Activated CD8-positive, alpha-beta T cell treated with anti-CD3 and anti-CD28 coated beads for 36 hours (primary cell): ENCODE measurements at regions of chr3 and their contacts with region 1.

Region 1: DNA sequence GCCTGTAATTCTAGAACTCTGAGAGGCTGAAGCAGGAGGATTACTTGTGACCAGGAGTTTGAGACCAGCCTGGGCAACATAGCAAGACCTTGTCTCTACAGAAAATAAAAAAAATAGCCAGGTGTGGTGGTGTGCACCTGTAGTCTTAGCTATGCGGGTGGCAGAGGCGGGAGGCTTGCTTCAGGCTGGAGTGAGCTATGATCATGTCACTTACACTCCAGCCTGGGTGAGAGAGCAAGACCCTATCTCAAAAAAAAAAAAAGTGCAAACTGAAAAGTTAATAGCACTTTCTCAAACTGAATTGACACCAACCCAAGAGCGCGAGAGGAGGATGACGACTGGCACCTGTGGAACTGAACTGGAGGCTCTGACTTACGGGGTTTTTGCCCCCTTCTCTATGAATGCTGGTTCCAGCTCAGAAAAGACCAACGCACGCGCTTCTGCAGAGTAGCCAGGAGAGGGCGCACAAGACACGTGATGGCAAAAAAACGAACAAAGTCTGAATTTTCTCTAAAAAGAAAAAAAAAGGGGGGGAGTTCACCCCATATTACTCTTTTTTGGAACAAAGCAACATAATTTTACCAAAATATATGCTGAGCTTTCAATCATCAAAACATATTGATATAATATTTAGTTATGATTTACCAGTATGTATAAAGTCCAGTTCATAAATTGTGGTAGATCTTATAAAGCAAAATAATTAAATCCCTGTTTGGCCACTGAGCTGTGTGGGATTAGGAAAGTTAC is 23.7 kb downstream of the CFAP92 start:
- DNase-seq: peak; percentile 73
- ATAC-seq: peak; percentile 80
- H3K4me3 Mint-ChIP-seq: no peak overlapping the region
- H3K27ac Mint-ChIP-seq: no peak overlapping the region
- H3K4me1 Mint-ChIP-seq: peaks cover 6% of the 10 kb centered on the region
- H3K27me3 Mint-ChIP-seq: no peaks in the 10 kb centered on the region
- CTCF ChIP-seq: peak; percentile 96

Region 2: GRCh38 chr3:128922804-128923459 is 47.2 kb before region 1 on chr3:
- CTCF ChIA-PET with region 1: interaction called, 11 read pairs
- POLR2A ChIA-PET with region 1: no interaction called
- intact Hi-C with region 1: no loop called
- DNase-seq: peak; percentile 83
- ATAC-seq: peak; percentile 88
- H3K4me3 Mint-ChIP-seq: peak overlapping the region; percentile 69
- H3K27ac Mint-ChIP-seq: peak overlapping the region; percentile 89
- H3K4me1 Mint-ChIP-seq: peaks cover 37% of the 10 kb centered on the region
- H3K27me3 Mint-ChIP-seq: no peaks in the 10 kb centered on the region
- CTCF ChIP-seq: peak; percentile 6

Region 3: GRCh38 chr3:129003578-129004160 is 33.5 kb after region 1 on chr3:
- CTCF ChIA-PET with region 1: interaction called, 73 read pairs
- POLR2A ChIA-PET with region 1: interaction called, 3 read pairs
- intact Hi-C with region 1: no loop called
- DNase-seq: peak; percentile 63
- ATAC-seq: peak; percentile 71
- H3K4me3 Mint-ChIP-seq: peak overlapping the region; percentile 71
- H3K27ac Mint-ChIP-seq: no peak overlapping the region
- H3K4me1 Mint-ChIP-seq: peaks cover 33% of the 10 kb centered on the region
- H3K27me3 Mint-ChIP-seq: peaks cover 20% of the 10 kb centered on the region
- CTCF ChIP-seq: no peak

Region 4: GRCh38 chr3:129068291-129068886 is 98.2 kb after region 1 on chr3:
- CTCF ChIA-PET with region 1: interaction called, 10 read pairs
- POLR2A ChIA-PET with region 1: no interaction called
- intact Hi-C with region 1: no loop called
- DNase-seq: peak; percentile 26
- ATAC-seq: peak; percentile 52
- H3K4me3 Mint-ChIP-seq: peak overlapping the region; percentile 61
- H3K27ac Mint-ChIP-seq: no peak overlapping the region
- H3K4me1 Mint-ChIP-seq: peaks cover 11% of the 10 kb centered on the region
- H3K27me3 Mint-ChIP-seq: no peaks in the 10 kb centered on the region
- CTCF ChIP-seq: no peak

Region 5: DNA sequence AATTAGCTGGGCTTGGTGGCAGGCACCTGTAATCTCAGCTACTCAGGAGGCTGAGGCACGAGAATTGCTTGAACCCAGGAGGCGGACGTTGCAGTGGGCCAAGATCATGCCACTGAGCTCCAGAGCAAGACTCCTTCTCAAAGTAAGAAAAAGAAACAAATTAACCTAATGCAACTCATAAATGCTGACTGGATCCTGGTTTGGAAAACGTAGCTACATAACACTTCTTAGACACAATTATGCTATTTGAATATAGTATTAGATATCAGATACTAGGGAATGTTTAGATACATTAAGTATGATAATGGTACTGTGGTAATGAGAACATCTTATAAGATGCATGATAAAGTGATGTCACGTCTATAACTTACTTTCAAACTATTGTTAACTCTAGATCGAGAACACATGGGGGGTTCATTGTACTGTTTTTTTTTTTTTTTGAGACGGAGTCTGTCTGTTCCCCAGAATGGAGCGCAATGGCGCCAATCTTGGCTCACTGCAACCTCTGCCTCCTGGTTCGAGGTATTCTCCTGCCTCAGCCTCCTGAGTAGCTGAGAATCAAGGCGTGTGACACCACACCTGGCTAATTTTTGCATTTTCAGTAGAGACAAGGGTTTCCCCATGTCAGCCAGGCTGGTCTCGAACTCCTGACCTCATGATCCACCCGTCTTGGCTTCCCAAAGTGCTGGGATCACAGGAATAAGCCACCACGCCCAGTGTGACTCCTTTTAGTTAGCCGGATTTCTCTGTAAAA is 196.6 kb after region 1 on chr3:
- CTCF ChIA-PET with region 1: interaction called, 31 read pairs
- POLR2A ChIA-PET with region 1: interaction called, 4 read pairs
- intact Hi-C with region 1: no loop called
- DNase-seq: no peak
- ATAC-seq: no peak
- H3K4me3 Mint-ChIP-seq: no peak overlapping the region
- H3K27ac Mint-ChIP-seq: peak overlapping the region; percentile 30
- H3K4me1 Mint-ChIP-seq: peaks cover 26% of the 10 kb centered on the region
- H3K27me3 Mint-ChIP-seq: no peaks in the 10 kb centered on the region
- CTCF ChIP-seq: no peak

Region 6: DNA sequence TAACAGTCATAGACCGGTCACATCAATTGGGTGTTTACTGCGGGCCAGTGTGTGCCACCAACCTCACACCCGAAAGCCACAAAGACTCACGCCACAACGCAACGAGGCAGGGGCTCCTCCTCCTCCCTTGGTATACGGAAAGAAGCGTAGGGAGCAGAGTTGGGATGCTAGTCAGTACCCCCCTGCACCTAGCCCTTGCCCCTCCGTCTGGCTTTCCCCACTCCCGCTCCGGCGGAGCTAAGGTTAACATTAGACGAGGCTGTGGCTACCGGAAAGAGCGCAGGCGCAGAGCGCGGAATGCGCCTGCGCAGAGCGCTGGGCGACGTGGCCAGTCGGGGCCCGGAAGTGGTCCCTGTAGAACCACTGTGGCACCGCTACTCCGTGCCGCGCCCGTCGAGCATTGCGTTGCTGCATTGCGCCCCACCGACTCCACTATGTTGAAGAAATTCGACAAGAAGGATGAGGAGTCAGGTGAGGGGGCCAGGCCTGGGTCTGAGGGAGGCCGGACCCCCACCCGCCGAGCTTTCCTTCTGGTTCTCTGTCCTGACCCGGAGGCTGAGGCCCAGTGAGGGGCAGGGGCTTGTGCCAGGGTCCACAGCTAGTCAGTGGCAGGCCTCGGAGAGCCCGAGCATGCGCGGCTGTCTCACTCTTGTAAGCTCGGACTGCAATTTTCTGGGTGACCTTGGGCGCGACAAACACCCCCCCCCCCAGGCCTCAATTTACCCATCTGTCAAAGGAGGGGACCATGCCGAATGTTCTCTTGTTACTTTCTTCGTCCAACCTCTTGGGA is 279.3 kb after region 1 on chr3 and contains the start of gene COPG1:
- CTCF ChIA-PET with region 1: interaction called, 98 read pairs
- POLR2A ChIA-PET with region 1: interaction called, 3 read pairs
- intact Hi-C with region 1: loop called (anchors 5 kb)
- DNase-seq: peak; percentile 89
- ATAC-seq: peak; percentile 86
- H3K4me3 Mint-ChIP-seq: peak within 1 kb of the TSS; percentile 95
- H3K27ac Mint-ChIP-seq: peak within 1 kb of the TSS; percentile 96
- H3K4me1 Mint-ChIP-seq: peaks cover 38% of the 10 kb centered on the region
- H3K27me3 Mint-ChIP-seq: no peaks in the 10 kb centered on the region
- CTCF ChIP-seq: no peak
- total RNA-seq, gene COPG1: 114 to 118 TPM

Region 7: GRCh38 chr3:129530251-129530791 is 560.2 kb after region 1 on chr3:
- CTCF ChIA-PET with region 1: no interaction called
- POLR2A ChIA-PET with region 1: no interaction called
- intact Hi-C with region 1: no loop called
- DNase-seq: no peak
- ATAC-seq: no peak
- H3K4me3 Mint-ChIP-seq: no peak overlapping the region
- H3K27ac Mint-ChIP-seq: no peak overlapping the region
- H3K4me1 Mint-ChIP-seq: no peaks in the 10 kb centered on the region
- H3K27me3 Mint-ChIP-seq: no peaks in the 10 kb centered on the region
- CTCF ChIP-seq: no peak